ENCODE measurements at regions of chr21 and their contacts with region 1.

Region 1: GRCh38 chr21:32713726-32714125 is 14.1 kb downstream of the SYNJ1 start:
- DNase-seq: no peak
- CTCF ChIP-seq: no peak

Region 2: DNA sequence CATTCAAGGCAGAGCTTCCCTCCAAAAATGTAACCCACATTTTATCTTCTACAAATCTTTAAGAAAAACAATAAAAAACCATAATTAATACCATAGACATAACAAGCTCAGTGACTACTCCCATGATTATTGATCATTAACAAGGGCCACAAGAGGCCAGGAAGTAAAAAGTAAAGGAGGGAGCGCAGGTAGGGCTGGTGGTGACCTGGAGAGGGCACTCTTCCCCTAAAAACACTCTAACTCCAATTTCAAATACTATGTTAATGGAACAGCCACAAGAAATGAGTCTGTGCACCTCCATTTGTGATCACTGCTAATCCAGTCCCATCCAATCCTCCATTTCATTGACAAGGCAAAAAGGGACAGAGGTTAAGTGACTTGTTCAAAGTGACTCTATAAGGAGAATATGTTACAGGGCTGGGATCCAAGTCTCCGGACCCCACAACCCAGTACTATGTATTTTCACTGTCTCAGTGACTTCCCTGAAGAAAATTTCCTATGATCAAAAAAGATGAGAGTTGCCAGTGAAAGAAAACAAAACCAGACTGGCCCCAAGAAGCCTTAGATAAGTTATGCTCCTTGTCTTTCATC is 60.3 kb before region 1 on chr21:
- CTCF ChIA-PET with region 1: no interaction called
- POLR2A ChIA-PET with region 1: no interaction called
- DNase-seq: peak; percentile 55
- CTCF ChIP-seq: peak; percentile 66

Region 3: DNA sequence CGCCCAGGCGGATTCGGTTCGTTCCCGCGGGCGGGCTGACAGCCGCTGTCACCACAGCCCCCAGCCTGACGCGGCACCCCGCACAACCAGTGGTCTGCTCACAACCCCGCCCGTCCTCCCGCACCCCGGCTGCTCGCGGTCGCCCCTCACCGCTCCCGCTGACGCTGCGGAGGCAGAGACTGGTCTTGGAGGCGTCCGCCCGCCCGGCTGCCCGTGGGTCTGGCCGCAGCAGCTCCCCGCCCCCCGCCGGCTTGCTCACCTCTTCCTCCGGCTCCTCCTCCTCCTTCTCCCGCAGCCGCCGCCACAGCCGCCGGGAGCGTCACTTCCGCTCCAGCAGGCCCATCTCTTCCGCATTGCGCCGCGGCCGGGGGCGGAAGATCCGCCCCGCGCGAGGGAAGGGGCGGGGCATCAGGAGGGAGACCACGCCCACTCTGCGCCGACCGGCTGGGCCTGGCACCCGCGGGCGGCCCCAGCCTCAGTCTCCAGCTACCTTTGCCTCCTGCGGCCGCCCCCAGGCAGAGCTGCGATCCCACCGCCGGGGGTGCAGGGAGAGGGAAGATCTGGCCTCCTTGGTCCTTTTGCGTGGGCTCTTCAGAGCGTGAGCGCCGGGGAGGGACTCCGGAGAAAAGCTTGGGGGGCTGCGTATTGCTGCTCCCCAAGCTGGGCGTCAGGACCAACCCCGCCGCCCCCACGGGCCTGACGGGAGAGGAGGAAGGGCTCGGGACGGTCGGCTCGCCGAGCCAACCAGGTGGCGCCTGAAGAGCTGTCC is 14.1 kb after region 1 on chr21 and contains the start of gene SYNJ1:
- CTCF ChIA-PET with region 1: interaction called, 15 read pairs
- POLR2A ChIA-PET with region 1: interaction called, 7 read pairs
- DNase-seq: peak; percentile 98
- CTCF ChIP-seq: no peak

Region 4: DNA sequence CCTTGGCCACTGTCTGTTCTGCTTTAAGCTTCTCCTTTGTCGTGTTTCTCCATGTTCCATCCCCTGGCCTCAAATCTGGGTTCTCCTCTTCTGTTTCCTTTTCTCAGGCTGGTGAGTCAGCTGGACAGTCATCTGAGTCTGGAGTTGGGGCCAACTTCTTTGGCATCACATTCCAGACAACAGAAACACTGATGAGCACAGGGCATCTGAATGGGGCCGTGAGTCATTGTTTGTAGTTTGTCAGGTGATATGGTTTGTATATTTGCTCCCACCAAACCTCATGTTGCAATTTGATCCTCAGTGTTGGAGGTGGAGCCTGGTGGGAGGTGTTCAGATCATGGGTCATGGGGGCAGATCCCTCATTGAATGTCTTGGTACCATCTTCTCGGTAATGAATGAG is 297.7 kb after region 1 on chr21:
- CTCF ChIA-PET with region 1: no interaction called
- POLR2A ChIA-PET with region 1: no interaction called
- DNase-seq: no peak
- CTCF ChIP-seq: no peak